Activated CD4-positive, alpha-beta T cell treated with anti-CD3 and anti-CD28 coated beads, Interleukin-2, amount 10 ng/mL, durations not matched to agents 24 days and 14 days (primary cell): ENCODE measurements at regions of chr16 and their contacts with region 1.

Region 1: GRCh38 chr16:2009789-2010510 is at the start of gene ZNF598:
- DNase-seq: peak; percentile 95
- H3K4me3 Mint-ChIP-seq: peak within 1 kb of the TSS; percentile 93
- H3K27ac Mint-ChIP-seq: peak within 1 kb of the TSS; percentile 92
- H3K4me1 Mint-ChIP-seq: peaks cover 28% of the 10 kb centered on the region
- H3K27me3 Mint-ChIP-seq: no peaks in the 10 kb centered on the region
- total RNA-seq, gene ZNF598: 93.9 and 99.0 TPM in 2 replicates

Region 2: DNA sequence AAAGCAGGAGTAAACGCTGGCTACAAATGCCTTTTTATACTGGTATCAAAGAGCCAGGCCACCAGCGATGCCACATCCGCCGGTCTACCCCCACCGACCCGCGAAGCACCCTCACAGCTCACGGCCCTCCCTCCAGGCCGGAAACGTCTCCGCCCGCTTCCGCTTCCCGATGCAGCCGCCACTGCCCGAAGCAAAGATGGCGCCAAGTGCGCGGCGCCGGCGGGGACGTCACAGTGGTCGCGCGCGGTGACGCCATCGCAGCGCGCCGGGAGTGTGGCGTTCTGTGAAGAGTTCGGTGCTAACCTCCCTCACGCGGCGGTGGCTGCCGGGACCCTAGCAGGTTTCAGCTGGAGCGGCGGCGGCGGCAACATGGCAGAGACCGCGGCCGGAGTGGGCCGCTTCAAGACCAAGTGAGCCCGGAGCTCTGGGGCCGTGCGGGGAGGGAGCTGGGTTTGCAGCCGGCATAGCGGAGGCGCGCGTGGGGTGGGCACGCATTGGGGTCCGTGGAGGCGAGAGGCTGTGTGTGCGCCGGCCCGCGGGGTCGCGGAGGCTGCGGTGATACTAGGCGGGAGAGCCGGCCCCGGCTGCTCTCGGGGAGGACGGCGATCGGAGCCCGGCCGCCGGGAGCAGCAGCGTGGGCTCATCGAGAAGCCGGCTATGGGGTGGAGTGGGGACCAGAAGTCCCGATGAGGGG is 38.0 kb before region 1 on chr16 and contains the start of gene TBL3:
- intact Hi-C with region 1: loop called (anchors 5 kb)
- DNase-seq: peak; percentile 99
- H3K4me3 Mint-ChIP-seq: peak within 1 kb of the TSS; percentile 99
- H3K27ac Mint-ChIP-seq: peak within 1 kb of the TSS; percentile 95
- H3K4me1 Mint-ChIP-seq: peaks cover 17% of the 10 kb centered on the region
- H3K27me3 Mint-ChIP-seq: no peaks in the 10 kb centered on the region
- total RNA-seq, gene TBL3: 81.4 and 87.5 TPM in 2 replicates

Region 3: GRCh38 chr16:2213817-2214720 is 204.1 kb after region 1 on chr16:
- intact Hi-C with region 1: loop called (anchors 10 kb)
- DNase-seq: no peak
- H3K4me3 Mint-ChIP-seq: peak overlapping the region; percentile 86
- H3K27ac Mint-ChIP-seq: peak overlapping the region; percentile 58
- H3K4me1 Mint-ChIP-seq: peaks cover 17% of the 10 kb centered on the region
- H3K27me3 Mint-ChIP-seq: no peaks in the 10 kb centered on the region

Region 4: DNA sequence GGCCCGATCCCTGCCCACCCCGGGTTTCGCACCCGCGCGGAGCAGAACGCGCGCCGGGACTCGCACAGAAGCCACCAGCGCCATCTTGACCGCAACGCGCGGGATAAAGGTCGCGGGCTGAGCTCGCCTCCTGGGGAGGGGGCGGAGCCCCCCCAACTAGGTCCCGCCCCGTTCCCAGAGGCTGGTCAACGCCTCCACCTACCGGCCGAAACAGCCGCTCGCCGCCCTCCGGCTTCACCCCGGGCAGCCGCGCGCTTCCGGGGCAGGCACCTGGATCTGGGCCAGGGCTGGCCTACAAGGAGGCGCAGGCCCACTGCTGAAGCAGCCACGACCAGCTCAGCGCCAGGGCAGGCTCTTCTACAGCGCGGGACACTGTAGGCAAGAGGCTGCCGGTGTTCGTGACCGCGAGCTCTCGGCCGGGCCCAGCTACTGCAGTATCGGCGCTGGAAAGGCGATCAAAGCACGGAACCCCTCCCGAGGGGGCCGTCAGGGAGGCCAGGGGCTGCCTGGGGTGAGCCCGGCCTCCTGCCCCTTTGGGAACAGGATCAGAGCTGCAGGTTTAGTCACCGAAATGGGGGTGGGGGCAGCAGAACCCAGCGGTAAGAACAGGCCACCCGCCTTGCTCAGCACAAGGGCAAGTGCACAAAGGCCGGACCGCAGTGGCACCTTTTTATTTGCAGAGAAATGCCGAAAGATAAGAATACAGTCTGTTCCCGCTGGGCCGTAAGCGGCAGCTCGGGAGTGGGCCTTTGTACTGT is 241.7 kb after region 1 on chr16 and contains the start of gene ECI1:
- intact Hi-C with region 1: loop called (anchors 5 kb)
- DNase-seq: peak; percentile 95
- H3K4me3 Mint-ChIP-seq: peak within 1 kb of the TSS; percentile 93
- H3K27ac Mint-ChIP-seq: peak within 1 kb of the TSS; percentile 90
- H3K4me1 Mint-ChIP-seq: peaks cover 6% of the 10 kb centered on the region
- H3K27me3 Mint-ChIP-seq: no peaks in the 10 kb centered on the region
- total RNA-seq, gene ECI1: 34.1 and 38.7 TPM in 2 replicates